Activated T-helper 1 cell treated with anti-CD3 and anti-CD28 coated beads, Interleukin-12 subunit alpha, Interleukin-12 subunit beta, Interleukin-2, Interleukin-4 antibody, amounts not matched to agents 30 ng/mL and 10 ng/mL and 1 ng/mL, durations not matched to agents 14 hours and 24 hours and 36 hours (primary cell): ENCODE measurements at regions of chr12 and their contacts with region 1.

Region 1: GRCh38 chr12:76083904-76084862 is at the start of gene NAP1L1:
- DNase-seq: peak; percentile 96
- H3K4me3 Mint-ChIP-seq: peak within 1 kb of the TSS; percentile 100
- H3K27ac Mint-ChIP-seq: peak within 1 kb of the TSS; percentile 100
- H3K4me1 Mint-ChIP-seq: peaks cover 62% of the 10 kb centered on the region
- H3K27me3 Mint-ChIP-seq: no peaks in the 10 kb centered on the region
- total RNA-seq, gene NAP1L1: 584 and 605 TPM in 2 replicates

Region 2: GRCh38 chr12:75511116-75512048 is 572.8 kb before region 1 on chr12 and contains the start of gene KRR1:
- intact Hi-C with region 1: loop called (anchors 1 kb)
- DNase-seq: peak; percentile 89
- H3K4me3 Mint-ChIP-seq: peak within 1 kb of the TSS; percentile 97
- H3K27ac Mint-ChIP-seq: peak within 1 kb of the TSS; percentile 98
- H3K4me1 Mint-ChIP-seq: peaks cover 45% of the 10 kb centered on the region
- H3K27me3 Mint-ChIP-seq: peaks cover 3% of the 10 kb centered on the region
- total RNA-seq, gene KRR1: 130 and 137 TPM in 2 replicates

Region 3: GRCh38 chr12:75944097-75944904 is 139.9 kb before region 1 on chr12:
- intact Hi-C with region 1: loop called (anchors 1 kb)
- DNase-seq: peak; percentile 27
- H3K4me3 Mint-ChIP-seq: peak overlapping the region; percentile 65
- H3K27ac Mint-ChIP-seq: peak overlapping the region; percentile 98
- H3K4me1 Mint-ChIP-seq: peaks cover 30% of the 10 kb centered on the region
- H3K27me3 Mint-ChIP-seq: no peaks in the 10 kb centered on the region

Region 4: DNA sequence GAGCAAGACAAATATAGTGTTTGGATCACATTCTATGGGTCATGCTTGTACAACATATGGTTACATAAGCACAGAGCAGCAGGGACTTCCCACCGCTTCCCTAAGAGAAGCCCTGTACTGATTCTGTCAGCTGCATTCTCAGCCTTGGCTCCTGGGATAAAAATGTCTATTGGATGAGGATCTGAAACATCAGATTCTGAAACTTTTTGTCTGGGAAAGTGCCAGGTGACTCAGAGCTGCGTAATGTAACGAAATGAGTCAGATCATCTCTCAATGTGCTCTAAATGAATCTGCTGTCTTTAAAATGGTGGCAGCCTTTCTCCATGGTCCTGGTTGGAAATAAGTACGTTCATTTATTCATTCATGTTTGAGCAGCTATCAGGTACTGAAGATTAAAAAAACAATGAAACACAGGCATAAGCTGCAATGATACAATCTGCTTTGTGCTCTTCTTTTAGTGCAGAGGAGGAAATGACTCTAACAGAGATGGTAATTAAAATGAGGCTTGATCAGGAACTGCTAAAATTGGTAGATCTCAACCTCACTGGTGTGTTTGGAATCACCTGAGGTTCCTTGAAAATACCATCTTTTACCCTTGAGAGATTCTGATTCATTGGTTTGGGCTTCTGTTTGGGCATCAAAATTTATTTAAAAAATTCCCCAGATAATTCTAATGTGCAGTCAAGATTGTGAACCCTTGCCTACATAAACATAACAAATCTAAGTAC is 99.4 kb after region 1 on chr12:
- intact Hi-C with region 1: loop called (anchors 1 kb)
- DNase-seq: no peak
- H3K4me3 Mint-ChIP-seq: no peak overlapping the region
- H3K27ac Mint-ChIP-seq: no peak overlapping the region
- H3K4me1 Mint-ChIP-seq: peaks cover 14% of the 10 kb centered on the region
- H3K27me3 Mint-ChIP-seq: peaks cover 36% of the 10 kb centered on the region

Region 5: DNA sequence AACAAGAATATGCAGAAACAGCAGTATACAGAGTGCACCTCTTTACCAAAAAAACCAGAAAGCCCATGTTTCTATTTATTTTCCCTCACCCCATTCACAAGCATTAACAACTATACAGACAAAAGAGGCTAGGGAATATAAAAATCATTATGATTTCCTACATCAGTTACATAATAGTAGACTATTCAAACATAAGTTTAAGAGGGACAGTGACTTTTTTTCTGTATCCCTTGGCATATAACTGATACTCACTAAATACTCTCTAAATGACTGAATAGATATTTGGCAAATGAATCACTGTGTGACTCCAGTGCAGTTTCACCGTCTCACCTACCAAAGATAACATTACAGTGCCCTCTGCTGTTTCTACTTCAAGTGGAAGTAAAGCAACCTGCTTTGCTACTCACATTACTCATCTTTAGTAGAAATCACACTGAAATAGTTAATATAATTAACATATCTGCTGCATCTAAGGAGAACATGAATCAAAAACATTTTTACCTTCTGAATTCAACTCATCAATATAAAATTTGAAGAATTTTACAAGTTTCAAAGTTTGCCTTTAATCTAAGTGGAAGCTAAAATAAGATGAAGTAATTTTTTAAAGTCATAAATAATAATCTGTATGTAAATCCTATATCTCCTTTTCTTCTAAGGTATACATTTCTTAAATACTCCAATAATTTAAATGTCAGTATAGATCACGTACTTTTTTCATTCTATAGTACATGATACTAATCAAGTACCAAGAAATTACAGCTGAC is 371.6 kb after region 1 on chr12:
- intact Hi-C with region 1: loop called (anchors 1 kb)
- DNase-seq: peak; percentile 5
- H3K4me3 Mint-ChIP-seq: no peak overlapping the region
- H3K27ac Mint-ChIP-seq: no peak overlapping the region
- H3K4me1 Mint-ChIP-seq: peaks cover 15% of the 10 kb centered on the region
- H3K27me3 Mint-ChIP-seq: no peaks in the 10 kb centered on the region

Region 6: GRCh38 chr12:76763743-76764675 is 679.8 kb after region 1 on chr12 and contains the start of gene ZDHHC17:
- intact Hi-C with region 1: loop called (anchors 1 kb)
- DNase-seq: peak; percentile 91
- H3K4me3 Mint-ChIP-seq: peak within 1 kb of the TSS; percentile 98
- H3K27ac Mint-ChIP-seq: peak within 1 kb of the TSS; percentile 94
- H3K4me1 Mint-ChIP-seq: peaks cover 19% of the 10 kb centered on the region
- H3K27me3 Mint-ChIP-seq: peaks cover 3% of the 10 kb centered on the region
- total RNA-seq, gene ZDHHC17: 23.3 and 32.3 TPM in 2 replicates